CD8-positive, alpha-beta T cell (primary cell): ENCODE measurements at regions of chr2 and their contacts with region 1.

Region 1: GRCh38 chr2:54522624-54523281 is 66.6 kb downstream of the SPTBN1 start:
- DNase-seq: peak; percentile 25 to 89 (median 64)
- ATAC-seq: peak; percentile 99
- H3K4me3 ChIP-seq: no peak overlapping the region
- H3K4me3 Mint-ChIP-seq: no peak overlapping the region
- H3K27ac ChIP-seq: no peak overlapping the region
- H3K27ac Mint-ChIP-seq: no peak overlapping the region
- H3K4me1 ChIP-seq: no peaks in the 10 kb centered on the region
- H3K4me1 Mint-ChIP-seq: peaks cover 8% of the 10 kb centered on the region
- H3K27me3 ChIP-seq: no peaks in the 10 kb centered on the region
- H3K27me3 Mint-ChIP-seq: peaks cover 12% of the 10 kb centered on the region
- CTCF ChIP-seq: peak; percentile 78

Region 2: DNA sequence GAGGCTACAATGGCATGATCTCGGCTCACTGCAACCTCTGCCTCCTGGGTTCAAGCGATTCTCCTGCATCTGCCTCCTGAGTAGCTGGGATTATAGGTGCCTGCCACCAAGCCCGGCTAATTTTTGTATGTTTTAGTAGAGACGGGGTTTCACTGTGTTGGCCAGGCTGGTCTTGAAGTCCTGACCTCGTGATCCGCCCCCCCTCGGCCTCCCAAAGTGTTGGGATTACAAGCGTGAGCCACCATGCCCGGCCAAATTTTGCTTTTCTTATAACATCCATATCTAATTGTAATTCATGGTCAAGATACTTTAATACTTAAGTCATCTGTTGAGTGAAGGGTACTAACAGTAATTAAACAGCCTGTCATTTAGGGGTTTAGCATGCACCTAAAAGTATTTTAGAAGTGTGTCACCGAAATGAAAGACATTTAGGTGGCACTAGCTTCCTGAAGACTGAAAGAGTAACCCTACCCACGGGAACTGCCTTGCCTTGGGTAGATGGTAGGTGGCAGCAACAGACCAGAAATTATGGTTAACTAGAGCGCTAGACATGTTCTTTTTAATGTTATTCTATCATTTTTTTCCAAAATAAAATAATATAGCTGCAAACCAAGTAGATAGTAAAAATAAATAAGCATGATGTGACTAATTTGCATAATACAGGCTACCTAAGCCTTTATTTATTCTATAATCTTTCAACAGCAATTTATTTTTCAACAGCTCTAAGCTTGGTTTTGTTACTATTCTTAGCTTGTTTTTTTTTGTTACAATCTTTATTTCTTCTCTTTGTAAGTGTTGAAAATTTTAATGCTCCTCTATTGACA is 415.9 kb before region 1 on chr2:
- CTCF ChIA-PET with region 1: interaction called, 15 read pairs
- POLR2A ChIA-PET with region 1: interaction called, 3 read pairs
- intact Hi-C with region 1: loop called (anchors 2 to 5 kb)
- DNase-seq: peak in 5 of 9 experiments; percentile 35 to 70 (median 53)
- ATAC-seq: peak; percentile 87
- H3K4me3 ChIP-seq: no peak overlapping the region
- H3K4me3 Mint-ChIP-seq: peak overlapping the region; percentile 11
- H3K27ac ChIP-seq: no peak overlapping the region
- H3K27ac Mint-ChIP-seq: no peak overlapping the region
- H3K4me1 ChIP-seq: no peaks in the 10 kb centered on the region
- H3K4me1 Mint-ChIP-seq: peaks cover 8% of the 10 kb centered on the region
- H3K27me3 ChIP-seq: no peaks in the 10 kb centered on the region
- H3K27me3 Mint-ChIP-seq: no peaks in the 10 kb centered on the region
- CTCF ChIP-seq: peak; percentile 70

Region 3: GRCh38 chr2:54570925-54571694 is 48.4 kb after region 1 on chr2:
- CTCF ChIA-PET with region 1: interaction called, 5 read pairs
- POLR2A ChIA-PET with region 1: no interaction called
- intact Hi-C with region 1: loop called in 1 of 2 experiments (anchors 5 kb)
- DNase-seq: peak; percentile 23 to 87 (median 69)
- ATAC-seq: peak; percentile 8
- H3K4me3 ChIP-seq: peak overlapping the region; percentile 13 to 21
- H3K4me3 Mint-ChIP-seq: peak overlapping the region; percentile 81
- H3K27ac ChIP-seq: peak overlapping the region; percentile 87 to 94
- H3K27ac Mint-ChIP-seq: peak overlapping the region; percentile 100
- H3K4me1 ChIP-seq: peaks cover 94% of the 10 kb centered on the region
- H3K4me1 Mint-ChIP-seq: peaks cover 95% of the 10 kb centered on the region
- H3K27me3 ChIP-seq: no peaks in the 10 kb centered on the region
- H3K27me3 Mint-ChIP-seq: no peaks in the 10 kb centered on the region
- CTCF ChIP-seq: no peak

Region 4: GRCh38 chr2:54606393-54606969 is 83.7 kb after region 1 on chr2:
- CTCF ChIA-PET with region 1: interaction called, 8 read pairs
- POLR2A ChIA-PET with region 1: no interaction called
- intact Hi-C with region 1: loop called in 1 of 2 experiments (anchors 2 kb)
- DNase-seq: peak in 4 of 9 experiments; percentile 17 to 54 (median 44)
- ATAC-seq: peak; percentile 79
- H3K4me3 ChIP-seq: no peak overlapping the region
- H3K4me3 Mint-ChIP-seq: peak overlapping the region; percentile 13
- H3K27ac ChIP-seq: no peak overlapping the region
- H3K27ac Mint-ChIP-seq: peak overlapping the region; percentile 92
- H3K4me1 ChIP-seq: peaks cover 77% of the 10 kb centered on the region
- H3K4me1 Mint-ChIP-seq: peaks cover 86% of the 10 kb centered on the region
- H3K27me3 ChIP-seq: no peaks in the 10 kb centered on the region
- H3K27me3 Mint-ChIP-seq: no peaks in the 10 kb centered on the region
- CTCF ChIP-seq: no peak

Region 5: GRCh38 chr2:54634564-54635511 is 112.1 kb after region 1 on chr2:
- CTCF ChIA-PET with region 1: interaction called, 6 read pairs
- POLR2A ChIA-PET with region 1: no interaction called
- intact Hi-C with region 1: loop called (anchors 5 kb)
- DNase-seq: peak in 2 of 9 experiments; percentile 26 to 55
- ATAC-seq: peak; percentile 53
- H3K4me3 ChIP-seq: no peak overlapping the region
- H3K4me3 Mint-ChIP-seq: peak overlapping the region; percentile 6
- H3K27ac ChIP-seq: peak overlapping the region in 1 of 2 experiments; percentile 8
- H3K27ac Mint-ChIP-seq: peak overlapping the region; percentile 49
- H3K4me1 ChIP-seq: peaks cover 16% of the 10 kb centered on the region
- H3K4me1 Mint-ChIP-seq: peaks cover 34% of the 10 kb centered on the region
- H3K27me3 ChIP-seq: no peaks in the 10 kb centered on the region
- H3K27me3 Mint-ChIP-seq: no peaks in the 10 kb centered on the region
- CTCF ChIP-seq: no peak

Region 6: GRCh38 chr2:54665436-54665856 is 142.7 kb after region 1 on chr2:
- CTCF ChIA-PET with region 1: interaction called, 33 read pairs
- POLR2A ChIA-PET with region 1: no interaction called
- intact Hi-C with region 1: loop called in 1 of 2 experiments (anchors 2 kb)
- DNase-seq: peak in 6 of 9 experiments; percentile 7 to 66 (median 39)
- ATAC-seq: peak; percentile 68
- H3K4me3 ChIP-seq: no peak overlapping the region
- H3K4me3 Mint-ChIP-seq: no peak overlapping the region
- H3K27ac ChIP-seq: no peak overlapping the region
- H3K27ac Mint-ChIP-seq: peak overlapping the region; percentile 75
- H3K4me1 ChIP-seq: no peaks in the 10 kb centered on the region
- H3K4me1 Mint-ChIP-seq: peaks cover 3% of the 10 kb centered on the region
- H3K27me3 ChIP-seq: no peaks in the 10 kb centered on the region
- H3K27me3 Mint-ChIP-seq: no peaks in the 10 kb centered on the region
- CTCF ChIP-seq: peak; percentile 68

Region 7: GRCh38 chr2:54838585-54839035 is 315.9 kb after region 1 on chr2:
- CTCF ChIA-PET with region 1: interaction called, 17 read pairs
- POLR2A ChIA-PET with region 1: no interaction called
- intact Hi-C with region 1: loop called (anchors 1 to 2 kb)
- DNase-seq: peak; percentile 28 to 75 (median 68)
- ATAC-seq: peak; percentile 80
- H3K4me3 ChIP-seq: no peak overlapping the region
- H3K4me3 Mint-ChIP-seq: no peak overlapping the region
- H3K27ac ChIP-seq: no peak overlapping the region
- H3K27ac Mint-ChIP-seq: no peak overlapping the region
- H3K4me1 ChIP-seq: no peaks in the 10 kb centered on the region
- H3K4me1 Mint-ChIP-seq: no peaks in the 10 kb centered on the region
- H3K27me3 ChIP-seq: no peaks in the 10 kb centered on the region
- H3K27me3 Mint-ChIP-seq: no peaks in the 10 kb centered on the region
- CTCF ChIP-seq: peak; percentile 95

Region 8: DNA sequence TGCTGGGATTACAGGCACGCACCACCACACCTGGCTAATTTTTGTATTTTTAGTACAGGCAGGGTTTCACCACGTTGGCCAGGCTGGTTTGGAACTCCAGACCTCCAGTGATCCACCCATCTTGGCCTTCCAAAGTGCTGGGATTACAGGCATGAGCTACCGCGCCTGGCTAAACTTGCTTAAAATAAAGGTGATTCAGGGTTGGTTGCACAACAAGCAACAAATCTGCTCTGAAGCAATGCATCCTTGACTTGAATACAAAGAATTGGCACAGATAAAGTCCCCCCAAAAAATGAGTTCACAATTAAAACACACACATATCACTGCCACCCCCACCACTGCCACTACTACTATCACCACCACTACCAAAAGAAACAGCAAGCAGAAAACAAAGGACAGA is 862.0 kb after region 1 on chr2:
- CTCF ChIA-PET with region 1: no interaction called
- POLR2A ChIA-PET with region 1: no interaction called
- intact Hi-C with region 1: no loop called
- DNase-seq: no peak
- ATAC-seq: no peak
- H3K4me3 ChIP-seq: no peak overlapping the region
- H3K4me3 Mint-ChIP-seq: no peak overlapping the region
- H3K27ac ChIP-seq: no peak overlapping the region
- H3K27ac Mint-ChIP-seq: no peak overlapping the region
- H3K4me1 ChIP-seq: no peaks in the 10 kb centered on the region
- H3K4me1 Mint-ChIP-seq: no peaks in the 10 kb centered on the region
- H3K27me3 ChIP-seq: no peaks in the 10 kb centered on the region
- H3K27me3 Mint-ChIP-seq: no peaks in the 10 kb centered on the region
- CTCF ChIP-seq: no peak